Gastrocnemius medialis (tissue), 4 donors: ENCODE measurements at regions of chr16 and their contacts with region 1.

Region 1: DNA sequence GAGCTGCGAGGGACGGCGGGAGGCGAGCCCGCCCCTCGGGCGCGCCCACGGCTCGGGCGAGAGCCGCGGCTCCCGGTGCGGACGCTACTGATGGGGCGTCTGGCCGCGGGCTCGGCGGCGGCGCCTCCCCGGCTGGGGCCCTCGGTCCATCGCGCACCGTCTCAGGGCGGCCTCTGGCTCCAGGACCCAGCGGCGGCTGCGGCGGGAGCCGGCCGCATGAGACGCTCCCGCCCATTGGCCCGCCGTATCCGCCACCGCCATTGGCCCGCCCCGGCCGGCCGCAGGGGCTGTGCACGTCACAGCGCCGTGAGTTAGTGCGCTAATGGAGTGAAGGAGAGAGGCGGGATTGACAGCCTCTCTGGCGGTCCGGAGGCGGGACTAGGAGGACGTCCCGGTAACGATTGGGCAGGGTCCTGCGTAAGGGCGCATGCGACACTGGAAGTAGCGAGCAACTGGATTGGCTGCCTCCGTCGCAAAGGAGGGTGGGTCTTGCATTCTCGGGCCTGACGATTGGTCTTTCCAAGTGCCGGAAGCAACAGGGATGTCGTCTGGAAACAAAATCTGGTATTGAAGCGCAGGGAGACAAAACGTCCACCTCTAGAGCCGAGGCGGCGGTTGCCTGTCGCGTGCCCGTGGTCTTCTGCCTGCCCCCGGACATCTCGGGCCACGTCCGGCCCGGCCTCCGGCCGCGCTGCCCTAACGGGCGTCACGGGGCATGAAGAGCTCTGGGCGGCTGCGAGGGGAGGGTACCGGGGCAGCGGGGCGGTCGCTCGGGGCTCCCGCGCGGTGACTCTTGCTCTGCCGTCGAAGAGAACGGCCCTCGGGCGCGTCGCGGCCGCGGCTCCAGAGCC is at the start of gene ANKRD11:
- DNase-seq: peak; percentile 100
- ATAC-seq: peak; percentile 91 to 93
- H3K4me3 ChIP-seq: peak within 1 kb of the TSS; percentile 76 to 96 (median 86)
- H3K27ac ChIP-seq: peak within 1 kb of the TSS; percentile 96 to 100 (median 98)
- H3K4me1 ChIP-seq: peaks cover 37 to 52% of the 10 kb centered on the region in 2 donors
- H3K27me3 ChIP-seq: no peaks in the 10 kb centered on the region
- CTCF ChIP-seq: no peak
- POLR2A ChIP-seq: peak; percentile 96 to 98
- total RNA-seq, gene ANKRD11: 26.0 to 77.0 (median 55.0) TPM

Region 2: DNA sequence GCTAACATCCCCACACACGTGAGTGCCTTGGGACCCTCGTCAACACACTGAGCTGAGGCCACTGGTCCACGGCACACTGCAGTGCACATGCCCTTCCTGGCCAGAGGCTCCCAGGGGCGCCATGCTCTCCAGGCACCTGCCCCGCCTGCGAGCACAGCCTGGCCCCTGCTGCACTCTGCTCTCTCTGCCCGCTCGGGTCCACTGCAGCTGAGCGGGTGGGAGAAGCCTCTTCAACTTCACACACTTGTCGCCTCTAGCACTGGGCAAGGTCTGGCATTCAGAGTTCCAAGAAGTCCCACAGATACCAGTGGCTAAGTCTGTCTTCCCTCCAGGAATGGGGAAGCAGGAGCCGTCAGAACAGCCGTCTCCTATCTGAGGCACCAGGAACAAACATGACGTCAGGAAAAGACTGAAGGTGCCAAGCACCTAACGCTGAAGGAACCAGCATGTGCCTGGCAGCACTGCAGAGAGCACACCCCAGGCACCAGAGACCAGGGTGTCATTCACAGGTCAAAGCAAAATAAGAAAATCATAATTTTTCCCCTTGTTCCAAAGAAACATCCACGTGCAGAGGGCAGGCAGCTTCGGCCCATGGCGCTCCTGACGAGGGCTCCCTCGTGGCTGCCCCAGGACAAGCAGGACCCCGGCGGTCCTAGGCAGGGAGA is 190.2 kb before region 1 on chr16:
- in situ Hi-C with region 1: no loop called
- intact Hi-C with region 1: loop called (anchors 2 kb)
- DNase-seq: peak; percentile 76 to 92
- ATAC-seq: peak; percentile 81 to 84
- H3K4me3 ChIP-seq: no peak overlapping the region
- H3K27ac ChIP-seq: peak overlapping the region; percentile 91 to 97 (median 92)
- H3K4me1 ChIP-seq: peaks cover 38 to 51% of the 10 kb centered on the region in 2 donors
- H3K27me3 ChIP-seq: no peaks in the 10 kb centered on the region
- CTCF ChIP-seq: no peak
- POLR2A ChIP-seq: peak; percentile 56 to 61

Region 3: GRCh38 chr16:89319883-89320781 is 170.5 kb before region 1 on chr16:
- in situ Hi-C with region 1: no loop called
- intact Hi-C with region 1: loop called (anchors 5 kb)
- DNase-seq: peak in 1 of 2 donors; percentile 82
- ATAC-seq: peak; percentile 41 to 51
- H3K4me3 ChIP-seq: peak overlapping the region; percentile 26 to 48 (median 35)
- H3K27ac ChIP-seq: peak overlapping the region; percentile 92 to 96 (median 93)
- H3K4me1 ChIP-seq: peaks cover 88 to 94% of the 10 kb centered on the region in 2 donors
- H3K27me3 ChIP-seq: no peaks in the 10 kb centered on the region
- CTCF ChIP-seq: no peak
- POLR2A ChIP-seq: no peak

Region 4: DNA sequence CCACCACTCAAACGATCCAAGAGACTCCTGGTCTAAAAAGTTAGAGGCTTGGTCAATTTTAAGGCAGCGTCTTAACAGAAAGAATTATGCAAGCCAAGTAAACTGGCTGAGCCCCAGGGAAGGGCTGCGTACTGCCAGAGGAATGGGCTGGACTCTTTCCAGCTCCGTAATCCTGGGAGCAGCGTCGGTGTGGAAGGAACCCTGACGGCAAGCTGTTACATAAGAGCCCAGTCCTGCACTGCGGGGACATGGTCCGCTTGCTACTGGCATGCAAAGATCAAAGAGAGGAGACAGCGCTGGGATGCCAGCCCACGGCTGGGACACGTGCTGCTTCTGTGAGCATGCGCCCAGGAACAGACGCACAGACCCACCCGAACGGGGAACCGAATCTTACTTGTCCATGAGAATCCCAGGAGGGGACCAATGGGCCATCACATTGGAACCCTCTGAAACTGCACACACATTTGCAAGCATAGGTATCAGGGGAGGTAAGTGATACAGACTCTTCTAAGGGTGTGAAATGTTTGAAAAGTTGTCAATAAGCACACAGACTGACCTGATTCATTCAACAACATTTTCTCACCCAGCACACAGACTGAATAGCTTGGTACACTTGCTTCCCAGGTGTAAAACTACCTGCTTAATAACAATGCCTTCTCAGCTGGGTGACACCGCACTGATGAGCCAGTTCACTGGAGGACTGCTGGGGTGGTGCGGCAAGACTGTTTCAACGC is 95.3 kb before region 1 on chr16:
- in situ Hi-C with region 1: no loop called
- intact Hi-C with region 1: loop called (anchors 1 kb)
- DNase-seq: peak; percentile 83 to 93
- ATAC-seq: peak; percentile 91 to 92
- H3K4me3 ChIP-seq: no peak overlapping the region
- H3K27ac ChIP-seq: peak overlapping the region; percentile 54 to 74 (median 69)
- H3K4me1 ChIP-seq: peaks cover 56 to 66% of the 10 kb centered on the region in 2 donors
- H3K27me3 ChIP-seq: no peaks in the 10 kb centered on the region
- CTCF ChIP-seq: no peak
- POLR2A ChIP-seq: no peak

Region 5: GRCh38 chr16:89507834-89508590 is 17.4 kb after region 1 on chr16 and contains the start of gene SPG7:
- in situ Hi-C with region 1: no loop called
- intact Hi-C with region 1: loop called (anchors 1 kb)
- DNase-seq: peak; percentile 59 to 77
- ATAC-seq: peak; percentile 87 to 92
- H3K4me3 ChIP-seq: peak within 1 kb of the TSS; percentile 70 to 98 (median 86)
- H3K27ac ChIP-seq: peak within 1 kb of the TSS; percentile 82 to 98 (median 94)
- H3K4me1 ChIP-seq: peaks cover 26 to 31% of the 10 kb centered on the region in 2 donors
- H3K27me3 ChIP-seq: no peaks in the 10 kb centered on the region
- CTCF ChIP-seq: peak in 2 of 5 experiments; percentile 7 to 19
- POLR2A ChIP-seq: peak; percentile 98
- total RNA-seq, gene SPG7: 67.7 to 117 (median 100.0) TPM

Region 6: GRCh38 chr16:89545831-89546574 is 55.4 kb after region 1 on chr16:
- in situ Hi-C with region 1: no loop called
- intact Hi-C with region 1: no loop called
- DNase-seq: no peak
- ATAC-seq: no peak
- H3K4me3 ChIP-seq: no peak overlapping the region
- H3K27ac ChIP-seq: no peak overlapping the region
- H3K4me1 ChIP-seq: no peaks in the 10 kb centered on the region
- H3K27me3 ChIP-seq: no peaks in the 10 kb centered on the region
- CTCF ChIP-seq: no peak
- POLR2A ChIP-seq: no peak

Region 7: DNA sequence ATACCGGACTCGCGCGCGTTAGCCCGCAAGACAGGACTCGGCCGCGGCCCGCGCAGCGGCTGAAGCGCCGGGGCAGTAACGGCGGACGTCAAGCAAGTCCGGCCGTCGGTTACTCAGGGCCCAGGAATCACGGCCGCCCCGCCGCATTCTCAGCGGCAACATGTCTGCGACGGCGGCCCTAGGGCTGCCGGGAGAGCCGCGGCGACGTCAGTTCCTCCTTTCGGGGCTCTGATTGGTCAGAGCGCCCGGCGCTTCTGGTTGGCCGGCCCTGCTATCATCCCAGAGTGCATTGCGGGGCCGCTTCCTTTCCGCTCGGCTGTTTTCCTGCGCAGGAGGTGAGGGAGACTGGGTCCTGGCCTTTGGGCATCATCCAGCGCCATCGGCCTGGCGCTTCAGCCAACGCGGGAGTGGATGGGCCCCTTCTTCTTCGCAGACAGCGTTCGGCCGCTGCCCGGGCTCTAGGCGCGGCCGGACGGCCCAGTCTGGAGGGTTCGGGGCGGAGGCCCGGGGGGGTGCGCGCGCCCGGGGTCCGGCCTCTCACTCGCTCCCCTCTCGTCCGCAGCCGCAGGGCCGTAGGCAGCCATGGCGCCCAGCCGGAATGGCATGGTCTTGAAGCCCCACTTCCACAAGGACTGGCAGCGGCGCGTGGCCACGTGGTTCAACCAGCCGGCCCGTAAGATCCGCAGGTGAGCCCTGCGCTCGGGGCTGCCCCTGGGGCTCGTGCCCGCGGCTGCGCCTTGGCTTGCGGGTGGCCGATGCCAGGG is 69.9 kb after region 1 on chr16 and contains the start of gene RPL13:
- in situ Hi-C with region 1: no loop called
- intact Hi-C with region 1: loop called (anchors 5 kb)
- DNase-seq: peak; percentile 92 to 95
- ATAC-seq: peak; percentile 82 to 86
- H3K4me3 ChIP-seq: peak within 1 kb of the TSS; percentile 60 to 99 (median 78)
- H3K27ac ChIP-seq: peak within 1 kb of the TSS; percentile 91 to 99 (median 96)
- H3K4me1 ChIP-seq: peaks cover 35 to 39% of the 10 kb centered on the region in 2 donors
- H3K27me3 ChIP-seq: no peaks in the 10 kb centered on the region
- CTCF ChIP-seq: peak in 1 of 5 experiments; percentile 15
- POLR2A ChIP-seq: peak; percentile 98
- total RNA-seq, gene RPL13: 4,295 to 5,889 (median 4,806) TPM